HEK293T (cell line): ENCODE measurements at regions of chr2 and their contacts with region 1.

Region 1: GRCh38 chr2:177263451-177264208 is 897 bp downstream of the NFE2L2 start:
- DNase-seq: peak; percentile 81

Region 2: GRCh38 chr2:177078416-177078815 is 185.2 kb before region 1 on chr2:
- CTCF ChIA-PET with region 1: no interaction called
- POLR2A ChIA-PET with region 1: no interaction called
- DNase-seq: no peak

Region 3: DNA sequence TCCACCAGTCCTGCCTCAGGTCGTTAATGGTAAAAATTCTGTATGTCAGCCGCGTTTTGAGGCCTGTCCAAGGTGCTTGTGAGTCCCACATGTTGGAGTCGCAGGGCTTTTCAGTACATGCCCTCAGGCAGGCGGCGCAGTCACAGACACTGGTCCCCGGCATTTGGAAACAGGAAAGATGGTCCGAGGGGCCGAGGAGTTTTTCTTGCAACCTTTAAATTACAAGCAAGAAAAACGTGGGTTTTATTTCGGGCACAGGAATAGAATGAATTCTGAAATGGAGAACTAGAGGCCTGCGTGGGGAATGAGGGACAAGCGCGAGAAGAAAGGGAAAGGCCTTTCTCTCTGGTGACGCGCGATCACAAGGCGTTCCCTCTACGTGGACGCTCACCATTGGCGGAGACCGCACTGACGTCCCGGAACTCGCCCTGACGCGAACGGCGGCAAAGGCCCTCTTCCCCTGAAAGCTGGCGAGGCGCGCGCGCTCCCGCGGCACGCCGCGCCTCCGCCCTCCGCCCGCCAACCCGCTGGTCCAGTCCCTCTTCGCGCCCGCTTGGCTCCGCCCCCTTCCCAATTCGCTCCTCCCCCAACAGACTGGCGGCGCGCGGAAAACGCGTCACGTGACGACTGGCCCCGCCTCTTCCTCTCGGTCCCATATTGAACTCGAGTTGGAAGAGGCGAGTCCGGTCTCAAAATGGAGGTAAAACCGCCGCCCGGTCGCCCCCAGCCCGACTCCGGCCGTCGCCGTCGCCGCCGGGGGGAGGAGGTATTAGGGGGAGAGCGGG is 51.3 kb before region 1 on chr2 and contains the start of gene HNRNPA3:
- CTCF ChIA-PET with region 1: no interaction called
- POLR2A ChIA-PET with region 1: interaction called, 12 read pairs
- DNase-seq: peak; percentile 98

Region 4: GRCh38 chr2:177245010-177245422 is 18.6 kb before region 1 on chr2:
- CTCF ChIA-PET with region 1: no interaction called
- POLR2A ChIA-PET with region 1: interaction called, 13 read pairs
- DNase-seq: peak; percentile 20

Region 5: GRCh38 chr2:177285892-177286715 is 22.5 kb after region 1 on chr2:
- CTCF ChIA-PET with region 1: interaction called, 4 read pairs
- POLR2A ChIA-PET with region 1: interaction called, 11 read pairs
- DNase-seq: no peak